ENCODE measurements at regions of chr20 and their contacts with region 1.

Region 1: DNA sequence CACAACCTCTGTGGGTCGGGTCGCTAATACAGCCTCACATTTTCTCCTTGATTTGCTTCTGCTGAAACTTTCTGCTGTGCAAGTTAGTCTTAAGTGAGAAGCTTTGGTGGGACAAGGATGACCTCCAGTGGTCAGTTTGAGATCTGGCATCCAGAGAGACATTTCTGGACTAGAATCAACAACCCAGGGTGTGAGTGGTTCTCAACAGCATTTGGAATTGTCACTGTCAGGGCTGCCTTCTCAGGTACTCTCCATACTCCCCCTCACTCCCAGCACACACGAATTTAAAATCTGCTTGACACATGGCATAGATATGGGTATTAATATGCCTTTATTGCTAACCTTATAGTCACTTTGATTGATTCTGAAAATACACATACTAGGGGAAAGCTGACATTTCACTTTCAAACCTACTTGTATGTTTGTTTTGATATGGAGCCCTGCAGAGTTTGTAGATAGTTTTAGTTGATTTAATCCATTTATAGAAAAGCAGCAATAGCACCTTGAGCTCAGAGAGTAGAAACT is 13.2 kb downstream of the OTOR start:
- DNase-seq: peak; percentile 19
- ATAC-seq: peak; percentile 90
- H3K4me3 ChIP-seq: no peak overlapping the region
- H3K27ac ChIP-seq: no peak overlapping the region
- H3K4me1 ChIP-seq: peaks cover 6% of the 10 kb centered on the region; the same call in 1 of the 2 replicates
- H3K27me3 ChIP-seq: no peaks in the 10 kb centered on the region; a peak in 2 of 4 replicates
- CTCF ChIP-seq: peak; percentile 66 to 85 (median 70); a peak in 5 of 6 replicates
- EP300 ChIP-seq: no peak
- POLR2A ChIP-seq: no peak
- RAD21 ChIP-seq: peak; percentile 95

Region 2: GRCh38 chr20:16279320-16279719 is 482.0 kb before region 1 on chr20:
- CTCF ChIA-PET with region 1: no interaction called
- POLR2A ChIA-PET with region 1: no interaction called
- RAD21 ChIA-PET with region 1: no interaction called
- SMC1A ChIA-PET with region 1: no interaction called
- in situ Hi-C with region 1: no loop called
- intact Hi-C with region 1: loop called (anchors 10 kb)
- DNase-seq: no peak
- ATAC-seq: peak; percentile 46; the same call in 2 of the 3 replicates
- H3K4me3 ChIP-seq: no peak overlapping the region
- H3K27ac ChIP-seq: no peak overlapping the region
- H3K4me1 ChIP-seq: no peaks in the 10 kb centered on the region
- H3K27me3 ChIP-seq: no peaks in the 10 kb centered on the region
- CTCF ChIP-seq: peak in 2 of 3 experiments; percentile 17 to 41; a peak in 2 of 6 replicates
- EP300 ChIP-seq: no peak
- POLR2A ChIP-seq: no peak
- RAD21 ChIP-seq: peak; percentile 56

Region 3: GRCh38 chr20:16517946-16518783 is 243.2 kb before region 1 on chr20:
- CTCF ChIA-PET with region 1: interaction called, 9 read pairs
- POLR2A ChIA-PET with region 1: no interaction called
- RAD21 ChIA-PET with region 1: interaction called, 6 read pairs
- SMC1A ChIA-PET with region 1: interaction called, 10 read pairs
- in situ Hi-C with region 1: loop called (anchors 5 kb)
- intact Hi-C with region 1: loop called (anchors 1 kb)
- DNase-seq: no peak
- ATAC-seq: peak; percentile 85
- H3K4me3 ChIP-seq: no peak overlapping the region
- H3K27ac ChIP-seq: no peak overlapping the region
- H3K4me1 ChIP-seq: no peaks in the 10 kb centered on the region
- H3K27me3 ChIP-seq: no peaks in the 10 kb centered on the region
- CTCF ChIP-seq: peak; percentile 41 to 53 (median 48); a peak in 5 of 6 replicates
- EP300 ChIP-seq: no peak
- POLR2A ChIP-seq: no peak
- RAD21 ChIP-seq: peak; percentile 40

Region 4: GRCh38 chr20:16701296-16701695 is 60.1 kb before region 1 on chr20:
- CTCF ChIA-PET with region 1: interaction called, 3 read pairs
- POLR2A ChIA-PET with region 1: no interaction called
- RAD21 ChIA-PET with region 1: no interaction called
- SMC1A ChIA-PET with region 1: interaction called, 3 read pairs
- in situ Hi-C with region 1: no loop called
- intact Hi-C with region 1: loop called (anchors 2 kb)
- DNase-seq: no peak
- ATAC-seq: peak; percentile 69
- H3K4me3 ChIP-seq: no peak overlapping the region
- H3K27ac ChIP-seq: no peak overlapping the region
- H3K4me1 ChIP-seq: no peaks in the 10 kb centered on the region
- H3K27me3 ChIP-seq: peaks cover 0 to 3% of the 10 kb centered on the region in 2 experiments; a peak in 1 of 4 replicates
- CTCF ChIP-seq: peak; percentile 29 to 50 (median 49); a peak in 5 of 6 replicates
- EP300 ChIP-seq: no peak
- POLR2A ChIP-seq: no peak
- RAD21 ChIP-seq: peak; percentile 53

Measured in GM12878 (cell line).